T-cell (primary cell): ENCODE measurements at regions of chr10 and their contacts with region 1.

Region 1: GRCh38 chr10:119834188-119834587 is 38.5 kb downstream of the MCMBP start:
- DNase-seq: no peak
- ATAC-seq: no peak
- H3K4me3 ChIP-seq: no peak overlapping the region
- H3K4me3 Mint-ChIP-seq: no peak overlapping the region
- H3K27ac ChIP-seq: peak overlapping the region; percentile 1
- H3K27ac Mint-ChIP-seq: peak overlapping the region; percentile 54 to 65
- H3K4me1 ChIP-seq: no peaks in the 10 kb centered on the region
- H3K4me1 Mint-ChIP-seq: peaks cover 0 to 15% (median 5%) of the 10 kb centered on the region in 3 donors
- H3K27me3 ChIP-seq: no peaks in the 10 kb centered on the region
- H3K27me3 Mint-ChIP-seq: no peaks in the 10 kb centered on the region

Region 2: GRCh38 chr10:119165171-119166110 is 668.7 kb before region 1 on chr10 and contains the start of gene SFXN4:
- CTCF ChIA-PET with region 1: interaction called in 1 of 2 experiments, 11 read pairs
- POLR2A ChIA-PET with region 1: no interaction called
- DNase-seq: peak; percentile 52 to 88 (median 72)
- ATAC-seq: peak; percentile 92 to 96 (median 94)
- H3K4me3 ChIP-seq: peak within 1 kb of the TSS; percentile 72 to 83
- H3K4me3 Mint-ChIP-seq: peak within 1 kb of the TSS; percentile 85 to 90 (median 88)
- H3K27ac ChIP-seq: peak within 1 kb of the TSS; percentile 68
- H3K27ac Mint-ChIP-seq: peak within 1 kb of the TSS; percentile 93 to 96
- H3K4me1 ChIP-seq: peaks cover 7 to 23% of the 10 kb centered on the region in 2 experiments
- H3K4me1 Mint-ChIP-seq: peaks cover 15 to 36% (median 30%) of the 10 kb centered on the region in 3 donors
- H3K27me3 ChIP-seq: no peaks in the 10 kb centered on the region
- H3K27me3 Mint-ChIP-seq: no peaks in the 10 kb centered on the region
- total RNA-seq, gene SFXN4: 10.4 to 19.4 (median 13.9) TPM

Region 3: GRCh38 chr10:119328223-119328622 is 506.0 kb before region 1 on chr10:
- CTCF ChIA-PET with region 1: no interaction called
- POLR2A ChIA-PET with region 1: interaction called in 1 of 2 experiments, 10 read pairs
- DNase-seq: no peak
- ATAC-seq: no peak
- H3K4me3 ChIP-seq: no peak overlapping the region
- H3K4me3 Mint-ChIP-seq: no peak overlapping the region
- H3K27ac ChIP-seq: no peak overlapping the region
- H3K27ac Mint-ChIP-seq: no peak overlapping the region
- H3K4me1 ChIP-seq: no peaks in the 10 kb centered on the region
- H3K4me1 Mint-ChIP-seq: peaks cover 10 to 18% (median 14%) of the 10 kb centered on the region in 3 donors
- H3K27me3 ChIP-seq: no peaks in the 10 kb centered on the region
- H3K27me3 Mint-ChIP-seq: no peaks in the 10 kb centered on the region